Posterior vena cava (tissue), 2 donors: ENCODE measurements at regions of chr7 and their contacts with region 1.

Region 1: GRCh38 chr7:94173436-94173835 is 169.3 kb upstream of the BET1 start:
- DNase-seq: no peak

Region 2: DNA sequence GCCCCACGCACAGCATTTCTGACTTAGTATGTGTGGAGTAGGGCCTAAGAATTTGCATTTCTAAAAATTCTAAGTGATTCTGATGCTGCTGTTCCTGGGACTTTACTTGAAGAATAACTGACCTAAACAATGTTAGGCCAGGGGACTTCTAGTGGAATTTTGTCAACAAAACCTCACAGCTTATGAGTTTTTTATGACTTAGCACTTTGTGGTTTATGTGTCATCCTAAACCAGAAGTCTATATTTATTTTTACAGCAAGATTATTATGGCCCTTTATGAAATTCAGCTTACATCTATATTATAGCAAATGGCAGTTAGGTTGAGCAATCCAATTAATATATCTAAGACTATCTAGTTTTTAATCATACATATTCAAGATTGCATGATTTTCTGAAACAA is 144.7 kb before region 1 on chr7:
- intact Hi-C with region 1: no loop called
- DNase-seq: no peak

Region 3: GRCh38 chr7:94080551-94080950 is 92.9 kb before region 1 on chr7:
- intact Hi-C with region 1: no loop called
- DNase-seq: no peak

Region 4: GRCh38 chr7:94145602-94146001 is 27.8 kb before region 1 on chr7:
- intact Hi-C with region 1: loop called in 1 of 2 experiments (anchors 2 kb)
- DNase-seq: no peak